ENCODE measurements at regions of chr4 and their contacts with region 1.

Region 1: GRCh38 chr4:168221301-168221700 is 97.3 kb downstream of the DDX60 start:
- DNase-seq: peak; percentile 55
- H3K4me3 ChIP-seq: no peak overlapping the region
- CTCF ChIP-seq: no peak

Region 2: DNA sequence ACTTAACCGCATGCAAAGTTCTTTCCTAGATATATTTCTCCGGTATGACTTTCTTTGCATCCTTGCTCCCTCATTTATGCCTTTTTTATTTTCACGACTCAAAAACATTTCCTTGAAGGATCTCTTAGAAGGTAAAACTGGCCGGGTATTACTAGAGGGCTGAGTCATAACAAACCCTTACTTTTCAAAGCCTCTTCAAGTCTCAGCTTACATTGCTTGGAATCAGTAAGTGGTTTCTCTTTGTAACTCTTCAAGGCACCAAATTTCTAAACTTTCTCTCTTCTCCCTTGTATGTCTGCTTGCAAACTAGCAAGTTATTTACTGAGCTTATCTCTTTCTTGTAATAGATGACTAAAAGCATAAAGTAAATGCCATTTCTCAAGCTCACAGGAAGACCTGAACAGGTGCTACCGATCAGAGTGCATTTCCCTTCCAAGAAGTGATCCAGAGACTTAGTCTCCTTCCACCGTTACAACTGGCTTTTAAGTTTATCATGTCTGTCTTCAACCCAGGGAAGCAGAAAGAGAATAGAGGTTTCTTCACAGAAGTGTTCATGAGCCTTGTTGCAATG is 53.5 kb before region 1 on chr4:
- in situ Hi-C with region 1: no loop called
- DNase-seq: no peak
- H3K4me3 ChIP-seq: no peak overlapping the region
- CTCF ChIP-seq: no peak

Region 3: DNA sequence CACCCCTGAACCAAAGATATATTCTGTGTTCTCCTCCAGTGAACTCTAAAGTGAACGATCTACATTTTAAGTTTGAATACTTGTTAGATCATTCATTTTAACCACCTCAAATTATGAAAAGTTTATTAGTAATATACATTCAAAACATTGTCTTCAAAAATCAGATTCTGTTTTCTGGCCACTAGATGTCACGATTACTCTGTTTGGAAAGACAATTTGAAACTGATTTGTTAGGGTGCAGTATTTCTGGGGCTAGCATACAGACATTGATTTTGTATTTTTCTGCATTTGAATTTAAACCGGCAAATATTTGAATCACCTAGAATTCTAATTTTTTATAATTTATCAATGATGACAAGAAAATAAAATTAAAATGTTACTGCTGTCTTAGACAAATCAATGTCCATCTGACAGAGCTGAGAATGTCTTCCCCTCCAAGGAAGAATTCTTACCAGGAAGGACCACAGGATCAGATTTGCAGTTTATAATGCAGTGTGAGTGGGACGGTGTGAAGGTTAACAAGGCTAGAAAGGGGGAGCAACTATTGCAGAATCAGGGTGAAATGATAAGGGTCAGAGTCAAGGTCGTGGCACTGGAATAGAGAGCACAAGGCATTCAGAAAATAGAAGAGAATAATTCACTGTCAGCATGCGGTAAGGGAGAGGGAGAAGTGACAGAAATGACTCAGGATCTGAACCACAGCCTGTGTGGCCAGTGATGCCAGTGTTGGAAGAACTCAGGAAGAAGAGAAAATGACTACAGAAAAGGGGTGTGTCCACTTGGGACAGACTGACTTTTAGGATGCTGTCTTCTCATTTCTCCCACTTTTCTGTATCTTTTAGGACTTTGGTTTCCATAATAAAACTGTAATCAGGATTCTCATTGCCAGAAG is 37.3 kb before region 1 on chr4:
- in situ Hi-C with region 1: no loop called
- DNase-seq: peak; percentile 27
- H3K4me3 ChIP-seq: no peak overlapping the region
- CTCF ChIP-seq: peak; percentile 47

Region 4: GRCh38 chr4:168257768-168258167 is 36.5 kb after region 1 on chr4:
- in situ Hi-C with region 1: loop called (anchors 5 kb)
- DNase-seq: no peak
- H3K4me3 ChIP-seq: no peak overlapping the region
- CTCF ChIP-seq: no peak

Region 5: GRCh38 chr4:168319486-168320019 is 98.3 kb after region 1 on chr4:
- in situ Hi-C with region 1: no loop called
- DNase-seq: no peak
- H3K4me3 ChIP-seq: no peak overlapping the region
- CTCF ChIP-seq: no peak

Measured in astrocyte of the cerebellum (primary cell).